WTC11 (cell line): ENCODE measurements at regions of chr3 and their contacts with region 1.

Region 1: GRCh38 chr3:8987645-8988383 is 24.5 kb upstream of the RAD18 start:
- DNase-seq: peak; percentile 85
- ATAC-seq: peak; percentile 90
- H3K4me3 Mint-ChIP-seq: peak overlapping the region; percentile 54
- H3K27ac Mint-ChIP-seq: no peak overlapping the region
- H3K4me1 Mint-ChIP-seq: peaks cover 10% of the 10 kb centered on the region
- H3K27me3 Mint-ChIP-seq: no peaks in the 10 kb centered on the region
- CTCF ChIP-seq: peak; percentile 78

Region 2: DNA sequence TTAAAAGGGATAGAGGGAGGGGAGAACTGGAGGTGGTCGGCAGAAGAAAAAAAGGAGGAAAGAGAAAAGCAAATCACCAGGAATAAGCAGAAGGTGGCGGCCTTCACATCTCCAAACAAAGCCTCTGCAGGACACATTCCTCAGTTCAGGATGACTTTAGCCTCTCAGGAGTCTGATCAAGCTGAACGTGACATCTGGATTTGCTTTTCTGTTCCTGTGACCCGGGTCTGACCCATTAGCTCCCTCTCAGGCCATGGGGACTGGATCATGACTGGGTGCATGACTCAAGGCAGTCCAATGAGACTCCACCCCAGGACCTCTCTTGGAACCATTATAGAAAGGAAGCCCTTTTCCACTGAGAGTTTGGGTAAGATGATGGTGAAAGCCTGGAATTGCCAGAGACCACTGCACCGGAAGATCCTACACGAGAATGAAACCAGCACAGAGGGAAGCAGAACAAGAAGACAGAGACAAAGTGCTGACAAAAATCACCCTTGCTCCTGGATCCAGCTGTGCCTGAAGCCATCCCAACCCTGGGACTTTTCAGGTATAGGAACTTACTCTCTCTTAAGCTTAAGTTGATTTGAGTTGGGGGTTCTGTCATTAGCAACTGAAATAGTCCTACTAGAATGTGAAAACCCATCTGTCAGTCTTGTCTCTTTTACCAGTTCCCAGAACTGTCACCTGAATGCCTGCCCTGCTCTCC is 20.9 kb after region 1 on chr3:
- CTCF ChIA-PET with region 1: interaction called, 27 read pairs
- POLR2A ChIA-PET with region 1: no interaction called
- DNase-seq: no peak
- ATAC-seq: peak; percentile 58
- H3K4me3 Mint-ChIP-seq: no peak overlapping the region
- H3K27ac Mint-ChIP-seq: no peak overlapping the region
- H3K4me1 Mint-ChIP-seq: peaks cover 9% of the 10 kb centered on the region
- H3K27me3 Mint-ChIP-seq: no peaks in the 10 kb centered on the region
- CTCF ChIP-seq: no peak

Region 3: GRCh38 chr3:9028134-9028533 is 40.3 kb after region 1 on chr3:
- CTCF ChIA-PET with region 1: interaction called, 20 read pairs
- POLR2A ChIA-PET with region 1: no interaction called
- DNase-seq: no peak
- ATAC-seq: no peak
- H3K4me3 Mint-ChIP-seq: no peak overlapping the region
- H3K27ac Mint-ChIP-seq: no peak overlapping the region
- H3K4me1 Mint-ChIP-seq: no peaks in the 10 kb centered on the region
- H3K27me3 Mint-ChIP-seq: no peaks in the 10 kb centered on the region; the same call in 1 of the 2 replicates
- CTCF ChIP-seq: no peak

Region 4: DNA sequence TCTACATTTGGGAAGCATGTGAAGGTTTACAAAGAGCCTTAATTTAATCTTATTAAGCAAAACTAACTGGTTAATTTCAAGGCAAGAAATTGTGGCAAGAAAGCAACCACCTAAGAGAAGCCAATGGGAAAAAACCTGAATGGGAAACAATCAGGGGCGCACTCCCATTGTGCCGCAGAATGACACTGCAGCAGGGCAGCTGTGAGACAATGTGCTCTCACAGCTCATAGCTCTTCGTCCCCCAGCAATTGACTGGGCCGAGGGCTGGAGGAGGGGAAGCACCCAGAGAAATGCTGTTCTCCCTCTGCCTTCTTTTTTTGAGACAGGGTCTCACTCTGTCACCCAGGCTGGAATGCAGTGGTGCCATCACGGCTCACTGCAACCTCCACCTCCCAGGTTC is 68.8 kb after region 1 on chr3:
- CTCF ChIA-PET with region 1: interaction called, 14 read pairs
- POLR2A ChIA-PET with region 1: no interaction called
- DNase-seq: no peak
- ATAC-seq: no peak
- H3K4me3 Mint-ChIP-seq: no peak overlapping the region
- H3K27ac Mint-ChIP-seq: no peak overlapping the region
- H3K4me1 Mint-ChIP-seq: no peaks in the 10 kb centered on the region; the same call in 1 of the 2 replicates
- H3K27me3 Mint-ChIP-seq: no peaks in the 10 kb centered on the region
- CTCF ChIP-seq: no peak

Region 5: GRCh38 chr3:9088441-9089353 is 100.9 kb after region 1 on chr3:
- CTCF ChIA-PET with region 1: interaction called, 12 read pairs
- POLR2A ChIA-PET with region 1: no interaction called
- DNase-seq: no peak
- ATAC-seq: no peak
- H3K4me3 Mint-ChIP-seq: no peak overlapping the region
- H3K27ac Mint-ChIP-seq: no peak overlapping the region
- H3K4me1 Mint-ChIP-seq: peaks cover 9% of the 10 kb centered on the region
- H3K27me3 Mint-ChIP-seq: no peaks in the 10 kb centered on the region; the same call in 1 of the 2 replicates
- CTCF ChIP-seq: no peak

Region 6: GRCh38 chr3:9249273-9250192 is 261.7 kb after region 1 on chr3 and contains the start of gene SRGAP3:
- CTCF ChIA-PET with region 1: interaction called, 25 read pairs
- POLR2A ChIA-PET with region 1: no interaction called
- DNase-seq: peak; percentile 85
- ATAC-seq: peak; percentile 97
- H3K4me3 Mint-ChIP-seq: peak within 1 kb of the TSS; percentile 81
- H3K27ac Mint-ChIP-seq: peak within 1 kb of the TSS; percentile 35
- H3K4me1 Mint-ChIP-seq: peaks cover 56% of the 10 kb centered on the region
- H3K27me3 Mint-ChIP-seq: no peaks in the 10 kb centered on the region
- CTCF ChIP-seq: no peak
- total RNA-seq, gene SRGAP3: 11.8 to 17.9 TPM (median 12.1 TPM) in 3 replicates